Sigmoid colon (tissue), 7 donors: ENCODE measurements at regions of chr2 and their contacts with region 1.

Region 1: DNA sequence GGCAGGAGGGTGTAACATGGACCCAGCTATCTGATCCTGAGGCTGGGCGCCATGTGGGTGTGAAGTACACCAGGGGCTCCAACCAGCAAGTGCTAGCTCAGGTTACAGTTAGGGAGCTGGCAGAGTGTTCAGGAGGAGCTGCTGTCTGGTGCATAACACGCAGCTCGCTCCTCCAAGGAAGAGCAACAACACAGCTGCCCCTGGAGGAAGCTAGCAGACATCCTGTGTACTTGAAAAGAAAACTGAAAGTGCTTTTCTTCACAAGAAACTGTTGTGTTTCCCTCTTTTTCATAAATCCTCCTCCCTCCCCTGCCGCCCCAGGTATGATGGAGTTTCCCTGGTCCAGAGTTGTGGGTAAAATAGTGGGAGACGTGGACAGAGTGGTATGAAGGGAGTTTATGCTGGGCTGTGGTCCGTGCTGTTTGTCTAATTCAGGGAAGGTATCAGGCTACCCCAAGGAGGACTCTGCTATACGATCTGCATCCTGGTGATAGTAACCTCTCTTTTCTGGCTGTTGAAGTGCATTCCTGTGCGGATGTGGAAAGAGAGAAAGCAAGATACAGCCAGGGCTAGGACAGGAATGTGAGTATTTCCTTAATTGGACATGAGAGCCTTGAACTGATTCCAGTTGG is 6.1 kb upstream of the LBH start:
- DNase-seq: peak; percentile 84
- H3K4me3 ChIP-seq: peak overlapping the region in 3 of 4 donors; percentile 7 to 44 (median 39)
- H3K27ac ChIP-seq: peak overlapping the region; percentile 63 to 86 (median 86)
- H3K4me1 ChIP-seq: peaks cover 0 to 31% (median 26%) of the 10 kb centered on the region in 4 donors
- H3K27me3 ChIP-seq: no peaks in the 10 kb centered on the region
- CTCF ChIP-seq: peak in 1 of 4 experiments; percentile 15
- EP300 ChIP-seq: no peak
- POLR2A ChIP-seq: peak in 1 of 2 donors; percentile 63

Region 2: GRCh38 chr2:32010670-32011484 is 1785.6 kb after region 1 on chr2 and contains the start of gene MEMO1:
- intact Hi-C with region 1: loop called (anchors 10 kb)
- DNase-seq: peak; percentile 96
- H3K4me3 ChIP-seq: peak within 1 kb of the TSS; percentile 64 to 97 (median 88)
- H3K27ac ChIP-seq: peak within 1 kb of the TSS; percentile 91 to 95 (median 92)
- H3K4me1 ChIP-seq: peaks cover 3 to 42% (median 23%) of the 10 kb centered on the region in 4 donors
- H3K27me3 ChIP-seq: no peaks in the 10 kb centered on the region
- CTCF ChIP-seq: no peak
- EP300 ChIP-seq: no peak
- POLR2A ChIP-seq: peak; percentile 21 to 39
- total RNA-seq, gene MEMO1: 18.3 to 39.6 (median 24.6) TPM